ENCODE measurements at regions of chr3 and their contacts with region 1.

Region 1: GRCh38 chr3:69161587-69162307 is 39.4 kb upstream of the LMOD3 start:
- DNase-seq: no peak
- H3K4me3 ChIP-seq: no peak overlapping the region
- CTCF ChIP-seq: peak in 1 of 3 donors; percentile 91
- POLR2A ChIP-seq: no peak

Region 2: GRCh38 chr3:67198374-67198773 is 1963.4 kb before region 1 on chr3:
- intact Hi-C with region 1: no loop called
- DNase-seq: no peak
- H3K4me3 ChIP-seq: no peak overlapping the region
- CTCF ChIP-seq: no peak
- POLR2A ChIP-seq: no peak

Region 3: GRCh38 chr3:69120879-69121464 is 40.8 kb before region 1 on chr3:
- intact Hi-C with region 1: no loop called
- DNase-seq: peak; percentile 68 to 93
- H3K4me3 ChIP-seq: no peak overlapping the region
- CTCF ChIP-seq: peak in 1 of 3 donors; percentile 75
- POLR2A ChIP-seq: no peak

Region 4: DNA sequence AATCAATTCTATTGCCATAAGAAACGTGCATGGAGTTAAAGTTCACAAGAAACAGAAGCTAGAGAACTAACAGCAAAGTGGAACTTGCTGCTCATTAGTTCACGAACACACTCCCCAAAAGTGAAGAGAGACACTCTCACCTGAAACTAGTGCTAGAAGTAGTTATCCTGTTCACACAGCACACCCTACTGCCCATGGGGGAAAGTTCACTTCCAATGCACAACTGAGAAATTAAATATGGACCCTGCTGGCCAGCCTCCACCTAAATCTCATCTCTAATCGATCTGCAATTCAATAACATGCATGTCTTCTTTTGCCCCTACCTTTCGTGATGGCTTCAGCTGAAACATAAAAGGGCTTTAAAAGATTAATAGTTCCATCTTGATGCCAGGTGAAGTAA is 263.5 kb after region 1 on chr3:
- intact Hi-C with region 1: loop called (anchors 10 kb)
- DNase-seq: no peak
- H3K4me3 ChIP-seq: no peak overlapping the region
- CTCF ChIP-seq: no peak
- POLR2A ChIP-seq: no peak

Region 5: DNA sequence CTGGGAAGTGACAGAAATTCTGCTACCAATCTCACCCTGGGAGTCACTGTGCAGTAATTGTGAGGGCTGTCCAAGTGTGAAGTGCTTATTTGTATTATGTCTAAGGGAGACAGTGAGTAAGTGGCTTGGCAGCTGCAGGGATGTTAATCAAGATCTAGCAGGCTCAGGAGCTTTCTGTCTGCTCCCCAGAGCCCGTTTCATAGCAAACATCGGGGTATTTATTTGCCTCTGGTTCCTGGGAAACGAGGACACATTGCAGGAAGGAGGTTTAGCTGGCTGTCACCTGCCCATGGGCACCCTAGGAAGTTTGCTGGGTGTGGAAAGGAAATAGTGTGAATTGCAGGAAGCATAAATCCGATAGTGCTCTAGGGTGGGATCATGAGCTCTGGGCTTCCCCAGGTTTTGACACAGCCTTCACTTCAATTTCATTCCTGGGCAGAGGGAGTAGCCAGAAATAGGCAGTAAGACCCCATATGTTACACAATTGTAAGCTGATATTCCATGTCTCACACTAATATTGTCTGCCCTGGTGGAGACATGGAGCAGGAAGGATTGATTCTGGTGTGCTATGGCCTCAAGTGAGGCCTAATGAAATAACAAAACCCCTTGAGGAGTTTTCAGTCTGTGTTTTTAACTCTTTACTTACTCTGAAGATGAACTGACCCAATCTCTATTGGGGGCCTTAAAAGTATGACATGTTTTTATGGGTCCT is 503.4 kb after region 1 on chr3:
- intact Hi-C with region 1: loop called (anchors 10 kb)
- DNase-seq: no peak
- H3K4me3 ChIP-seq: no peak overlapping the region
- CTCF ChIP-seq: no peak
- POLR2A ChIP-seq: no peak

Measured in lower leg skin (tissue), 4 donors.